Natural killer cell (primary cell): ENCODE measurements at regions of chr1 and their contacts with region 1.

Region 1: DNA sequence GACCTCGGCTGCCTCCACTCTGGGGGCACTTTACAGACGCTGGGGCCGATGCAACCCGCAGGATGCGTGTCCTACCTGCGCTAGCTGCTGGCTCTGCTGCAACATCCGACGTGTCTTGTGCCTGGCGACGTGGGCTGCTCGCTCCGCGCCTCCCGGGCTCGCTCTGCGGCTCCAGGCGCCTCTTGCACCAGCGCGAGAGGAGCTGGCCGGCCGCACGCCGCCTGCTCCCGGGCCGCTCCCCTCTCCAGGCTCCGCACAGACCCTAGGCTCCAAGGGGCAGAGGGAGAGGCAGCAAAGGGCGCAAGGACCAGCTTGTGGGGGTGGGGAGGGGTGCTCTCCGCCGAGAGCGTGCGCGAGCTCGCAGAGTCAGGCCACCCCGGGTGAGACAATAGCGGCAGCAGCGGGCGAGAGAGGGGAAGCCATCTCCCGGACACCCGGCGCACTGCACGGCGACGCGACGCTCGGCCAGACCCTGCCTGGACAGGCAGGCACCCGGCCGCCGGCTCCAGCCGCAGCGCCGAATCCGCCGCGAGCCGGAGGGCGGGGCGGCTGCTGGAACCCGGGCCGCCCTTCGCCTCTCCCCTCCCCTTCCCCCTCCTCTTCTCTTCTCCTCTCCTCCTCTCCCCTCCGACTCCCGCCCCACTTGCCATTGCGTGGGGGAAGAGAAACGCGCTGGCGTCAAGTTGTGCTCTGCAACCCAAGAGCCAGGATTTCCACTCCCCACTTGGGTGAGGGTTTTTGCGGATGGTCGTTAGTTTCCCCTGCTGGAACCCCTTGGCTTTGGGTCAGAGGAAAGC is at the start of gene PIK3C2B:
- DNase-seq: peak; percentile 61 to 83
- ATAC-seq: peak; percentile 81 to 90 (median 85)
- H3K4me3 ChIP-seq: peak within 1 kb of the TSS; percentile 78
- H3K4me3 Mint-ChIP-seq: peak within 1 kb of the TSS; percentile 96
- H3K27ac ChIP-seq: peak within 1 kb of the TSS; percentile 76
- H3K27ac Mint-ChIP-seq: peak within 1 kb of the TSS; percentile 90 to 95
- H3K4me1 ChIP-seq: peaks cover 23% of the 10 kb centered on the region
- H3K4me1 Mint-ChIP-seq: peaks cover 35 to 43% of the 10 kb centered on the region in 2 donors
- H3K27me3 ChIP-seq: no peaks in the 10 kb centered on the region
- H3K27me3 Mint-ChIP-seq: peaks cover 0 to 3% of the 10 kb centered on the region in 2 donors
- CTCF ChIP-seq: peak; percentile 29
- total RNA-seq, gene PIK3C2B: 18.1 to 34.8 (median 29.5) TPM

Region 2: GRCh38 chr1:204446370-204447111 is 47.9 kb before region 1 on chr1:
- intact Hi-C with region 1: loop called (anchors 2 kb)
- DNase-seq: peak; percentile 65 to 89
- ATAC-seq: peak; percentile 89 to 99 (median 97)
- H3K4me3 ChIP-seq: no peak overlapping the region
- H3K4me3 Mint-ChIP-seq: no peak overlapping the region
- H3K27ac ChIP-seq: no peak overlapping the region
- H3K27ac Mint-ChIP-seq: peak overlapping the region; percentile 76 to 86
- H3K4me1 ChIP-seq: peaks cover 13% of the 10 kb centered on the region
- H3K4me1 Mint-ChIP-seq: peaks cover 4% of the 10 kb centered on the region in 2 donors
- H3K27me3 ChIP-seq: no peaks in the 10 kb centered on the region
- H3K27me3 Mint-ChIP-seq: no peaks in the 10 kb centered on the region
- CTCF ChIP-seq: peak; percentile 74

Region 3: GRCh38 chr1:204516180-204516879 is 21.9 kb after region 1 on chr1 and contains the start of gene MDM4:
- intact Hi-C with region 1: no loop called
- DNase-seq: peak; percentile 90 to 96
- ATAC-seq: peak; percentile 79 to 95 (median 89)
- H3K4me3 ChIP-seq: peak within 1 kb of the TSS; percentile 76
- H3K4me3 Mint-ChIP-seq: no peak within 1 kb of the TSS
- H3K27ac ChIP-seq: peak within 1 kb of the TSS; percentile 94
- H3K27ac Mint-ChIP-seq: no peak within 1 kb of the TSS
- H3K4me1 ChIP-seq: peaks cover 69% of the 10 kb centered on the region
- H3K4me1 Mint-ChIP-seq: peaks cover 41 to 44% of the 10 kb centered on the region in 2 donors
- H3K27me3 ChIP-seq: no peaks in the 10 kb centered on the region
- H3K27me3 Mint-ChIP-seq: no peaks in the 10 kb centered on the region
- CTCF ChIP-seq: no peak
- total RNA-seq, gene MDM4: 295 to 324 (median 296) TPM